ENCODE measurements at regions of chr14 and their contacts with region 1.

Region 1: DNA sequence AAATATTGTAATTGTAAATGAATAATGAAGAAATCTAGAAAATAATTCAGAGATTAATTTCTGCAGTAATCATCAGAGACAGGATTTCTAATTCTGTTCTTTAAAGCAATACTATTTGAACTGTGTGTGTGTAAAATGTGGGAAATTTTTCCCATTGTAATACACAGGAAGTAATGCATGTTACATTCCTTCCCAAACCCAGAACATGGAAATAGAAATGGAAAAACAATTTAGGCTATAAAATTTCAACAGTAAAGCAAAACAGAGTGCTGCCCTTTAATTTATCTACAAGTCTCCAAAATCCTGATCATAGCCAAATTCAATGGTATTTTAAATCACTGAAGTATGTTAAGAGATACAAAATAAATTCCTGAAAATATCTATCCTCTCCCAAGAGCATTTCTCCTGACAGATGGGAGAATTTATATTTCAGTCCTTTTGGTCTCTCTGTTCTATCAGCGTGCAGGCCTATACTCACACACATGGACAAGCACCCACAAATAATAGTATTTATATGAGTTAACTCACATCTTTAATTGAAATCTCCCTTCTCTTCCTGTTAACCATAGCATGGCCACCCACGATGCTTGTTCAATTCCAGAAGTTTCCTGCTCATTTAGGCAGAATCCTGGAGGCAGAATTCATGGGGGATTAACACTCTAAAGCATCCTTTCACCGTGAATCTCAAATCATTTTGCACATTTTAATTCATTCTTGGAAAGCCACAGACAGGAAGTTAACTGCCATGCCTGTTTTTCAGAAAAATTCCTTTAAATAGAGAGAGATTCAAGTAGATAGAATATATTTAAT is 1465.4 kb upstream of the FLRT2 start:
- DNase-seq: no peak
- H3K4me3 ChIP-seq: no peak overlapping the region
- H3K27ac ChIP-seq: no peak overlapping the region
- H3K4me1 ChIP-seq: no peaks in the 10 kb centered on the region
- H3K27me3 ChIP-seq: no peaks in the 10 kb centered on the region
- CTCF ChIP-seq: no peak
- POLR2A ChIP-seq: no peak

Region 2: GRCh38 chr14:84074626-84075025 is 10.1 kb after region 1 on chr14:
- intact Hi-C with region 1: no loop called
- DNase-seq: no peak
- H3K4me3 ChIP-seq: no peak overlapping the region
- H3K27ac ChIP-seq: no peak overlapping the region
- H3K4me1 ChIP-seq: no peaks in the 10 kb centered on the region
- H3K27me3 ChIP-seq: no peaks in the 10 kb centered on the region
- CTCF ChIP-seq: no peak
- POLR2A ChIP-seq: no peak

Region 3: GRCh38 chr14:85159726-85160125 is 1095.2 kb after region 1 on chr14:
- intact Hi-C with region 1: loop called (anchors 5 kb)
- DNase-seq: no peak
- H3K4me3 ChIP-seq: no peak overlapping the region
- H3K27ac ChIP-seq: no peak overlapping the region
- H3K4me1 ChIP-seq: no peaks in the 10 kb centered on the region
- H3K27me3 ChIP-seq: no peaks in the 10 kb centered on the region
- CTCF ChIP-seq: no peak
- POLR2A ChIP-seq: no peak

Measured in breast epithelium (tissue), 4 donors.